ENCODE measurements at regions of chr1 and their contacts with region 1.

Region 1: DNA sequence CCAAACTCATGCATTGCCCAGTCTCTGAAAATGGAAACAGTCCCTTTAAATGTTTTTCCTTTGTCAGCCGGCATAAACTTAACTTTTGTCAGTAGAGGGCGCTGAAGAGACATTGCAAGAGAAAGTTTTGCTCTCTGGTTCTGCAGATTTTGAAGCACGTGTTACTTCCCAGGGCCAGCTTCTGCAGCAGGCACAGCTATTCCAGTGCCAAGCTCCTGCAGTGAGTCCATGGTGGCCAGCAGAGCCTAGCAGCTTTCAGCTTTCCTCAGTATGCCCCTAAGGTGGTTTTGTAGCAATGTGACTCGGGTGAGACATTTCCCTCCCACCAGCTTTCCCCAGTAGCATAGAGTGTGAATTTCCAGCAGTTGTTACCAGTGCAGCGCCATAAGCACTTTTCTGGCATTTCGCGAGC is 2.6 kb upstream of the IFI44L start:
- DNase-seq: peak; percentile 13 to 88 (median 46)
- ATAC-seq: peak; percentile 65
- H3K4me3 ChIP-seq: no peak overlapping the region
- H3K4me3 Mint-ChIP-seq: peak overlapping the region; percentile 79
- H3K27ac ChIP-seq: no peak overlapping the region
- H3K27ac Mint-ChIP-seq: peak overlapping the region; percentile 83
- H3K4me1 ChIP-seq: peaks cover 15% of the 10 kb centered on the region
- H3K4me1 Mint-ChIP-seq: peaks cover 46% of the 10 kb centered on the region
- H3K27me3 ChIP-seq: no peaks in the 10 kb centered on the region
- H3K27me3 Mint-ChIP-seq: no peaks in the 10 kb centered on the region
- CTCF ChIP-seq: peak; percentile 86

Region 2: GRCh38 chr1:78145105-78145580 is 472.5 kb before region 1 on chr1:
- CTCF ChIA-PET with region 1: no interaction called
- POLR2A ChIA-PET with region 1: interaction called, 3 read pairs
- intact Hi-C with region 1: loop called in 1 of 2 experiments (anchors 5 kb)
- DNase-seq: peak in 5 of 14 experiments; percentile 7 to 63 (median 40)
- ATAC-seq: peak; percentile 37
- H3K4me3 ChIP-seq: no peak overlapping the region
- H3K4me3 Mint-ChIP-seq: no peak overlapping the region
- H3K27ac ChIP-seq: no peak overlapping the region
- H3K27ac Mint-ChIP-seq: no peak overlapping the region
- H3K4me1 ChIP-seq: peaks cover 7% of the 10 kb centered on the region
- H3K4me1 Mint-ChIP-seq: peaks cover 20% of the 10 kb centered on the region
- H3K27me3 ChIP-seq: peaks cover 0 to 12% of the 10 kb centered on the region in 2 experiments
- H3K27me3 Mint-ChIP-seq: peaks cover 18% of the 10 kb centered on the region
- CTCF ChIP-seq: peak; percentile 78

Region 3: DNA sequence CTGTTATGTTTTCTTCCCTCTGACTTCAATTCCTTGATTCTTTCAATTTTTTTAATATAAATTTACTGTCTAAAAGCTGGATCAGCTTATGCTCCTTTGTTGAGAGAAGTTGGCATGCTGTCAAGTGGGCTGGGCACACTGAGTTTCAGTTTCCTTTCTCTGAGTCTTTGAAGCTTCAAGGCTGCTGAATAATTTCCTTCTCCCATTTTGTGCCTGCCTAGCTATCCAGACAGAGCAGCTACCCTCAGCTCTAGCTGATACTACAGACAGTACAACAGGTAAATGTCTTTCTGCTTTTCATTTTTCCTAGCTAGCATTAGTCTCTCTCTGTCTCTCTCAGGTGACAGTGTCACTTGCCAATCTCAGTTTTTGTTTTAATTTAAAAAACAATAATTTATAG is 32.0 kb after region 1 on chr1 and contains the start of gene IFI44:
- CTCF ChIA-PET with region 1: interaction called, 8 read pairs
- POLR2A ChIA-PET with region 1: interaction called, 29 read pairs
- intact Hi-C with region 1: loop called (anchors 2 kb)
- DNase-seq: peak; percentile 59 to 90 (median 73)
- ATAC-seq: peak; percentile 81
- H3K4me3 ChIP-seq: peak within 1 kb of the TSS; percentile 65
- H3K4me3 Mint-ChIP-seq: peak within 1 kb of the TSS; percentile 92
- H3K27ac ChIP-seq: peak within 1 kb of the TSS; percentile 30 to 55
- H3K27ac Mint-ChIP-seq: peak within 1 kb of the TSS; percentile 80
- H3K4me1 ChIP-seq: peaks cover 30% of the 10 kb centered on the region
- H3K4me1 Mint-ChIP-seq: peaks cover 81% of the 10 kb centered on the region
- H3K27me3 ChIP-seq: no peaks in the 10 kb centered on the region
- H3K27me3 Mint-ChIP-seq: no peaks in the 10 kb centered on the region
- CTCF ChIP-seq: no peak
- total RNA-seq, gene IFI44: 67.4 to 70.0 TPM

Region 4: GRCh38 chr1:78682496-78682895 is 64.9 kb after region 1 on chr1:
- CTCF ChIA-PET with region 1: interaction called, 15 read pairs
- POLR2A ChIA-PET with region 1: interaction called, 3 read pairs
- intact Hi-C with region 1: no loop called
- DNase-seq: no peak
- ATAC-seq: no peak
- H3K4me3 ChIP-seq: no peak overlapping the region
- H3K4me3 Mint-ChIP-seq: no peak overlapping the region
- H3K27ac ChIP-seq: no peak overlapping the region
- H3K27ac Mint-ChIP-seq: no peak overlapping the region
- H3K4me1 ChIP-seq: no peaks in the 10 kb centered on the region
- H3K4me1 Mint-ChIP-seq: no peaks in the 10 kb centered on the region
- H3K27me3 ChIP-seq: no peaks in the 10 kb centered on the region
- H3K27me3 Mint-ChIP-seq: peaks cover 10% of the 10 kb centered on the region
- CTCF ChIP-seq: no peak

Measured in CD4-positive, alpha-beta T cell (primary cell).